ENCODE measurements at regions of chr2 and their contacts with region 1.

Region 1: GRCh38 chr2:219229305-219230058 is at the starts of genes ANKZF1 and ATG9A:
- DNase-seq: peak; percentile 97 to 98
- H3K4me3 ChIP-seq: peak within 1 kb of the TSS; percentile 67
- H3K27ac ChIP-seq: peak within 1 kb of the TSS; percentile 77
- H3K4me1 ChIP-seq: peaks cover 16% of the 10 kb centered on the region
- H3K27me3 ChIP-seq: no peaks in the 10 kb centered on the region
- CTCF ChIP-seq: no peak
- total RNA-seq, gene ANKZF1: 62.2 and 65.1 TPM in 2 replicates
- total RNA-seq, gene ATG9A: 56.0 and 64.5 TPM in 2 replicates

Region 2: GRCh38 chr2:218944759-218945404 is 284.6 kb before region 1 on chr2:
- CTCF ChIA-PET with region 1: no interaction called
- POLR2A ChIA-PET with region 1: no interaction called
- intact Hi-C with region 1: no loop called
- DNase-seq: no peak
- H3K4me3 ChIP-seq: no peak overlapping the region
- H3K27ac ChIP-seq: no peak overlapping the region
- H3K4me1 ChIP-seq: no peaks in the 10 kb centered on the region
- H3K27me3 ChIP-seq: no peaks in the 10 kb centered on the region
- CTCF ChIP-seq: no peak

Region 3: DNA sequence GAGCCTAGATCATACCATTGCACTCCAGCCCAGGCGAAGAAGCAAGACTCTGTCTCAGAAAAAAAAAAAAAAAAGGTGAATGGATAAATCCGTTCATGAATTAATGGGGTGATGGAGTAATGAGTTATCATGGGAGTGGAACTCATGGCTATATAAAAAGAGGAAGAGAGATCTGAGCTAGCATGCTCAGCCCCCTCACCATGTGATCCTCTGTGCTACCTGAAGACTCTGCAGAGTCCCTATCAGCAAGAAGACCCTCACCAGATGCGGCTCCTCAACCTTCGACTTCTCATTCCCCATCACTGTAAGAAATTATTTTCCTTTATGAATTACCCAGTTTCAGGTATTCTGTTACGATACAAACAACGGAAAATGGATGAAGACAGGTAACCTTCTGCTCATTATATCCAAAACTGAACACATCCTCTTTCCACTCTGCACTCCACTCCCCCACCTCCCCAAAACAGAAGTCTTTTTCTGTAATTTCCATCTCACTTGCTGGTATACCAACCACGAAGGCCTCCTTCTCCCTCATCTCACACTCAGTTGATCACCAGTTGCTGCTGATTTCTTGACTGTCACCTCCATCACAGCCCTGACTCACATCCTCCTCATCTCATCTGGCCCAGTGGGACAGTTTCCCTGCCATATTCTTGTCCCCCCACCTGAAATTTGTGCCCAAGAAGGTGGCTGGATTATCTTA is 42.6 kb before region 1 on chr2:
- CTCF ChIA-PET with region 1: no interaction called
- POLR2A ChIA-PET with region 1: no interaction called
- intact Hi-C with region 1: no loop called
- DNase-seq: no peak
- H3K4me3 ChIP-seq: no peak overlapping the region
- H3K27ac ChIP-seq: no peak overlapping the region
- H3K4me1 ChIP-seq: no peaks in the 10 kb centered on the region
- H3K27me3 ChIP-seq: no peaks in the 10 kb centered on the region
- CTCF ChIP-seq: no peak

Region 4: GRCh38 chr2:219253753-219254590 is 24.5 kb after region 1 on chr2 and contains the start of gene TUBA4A:
- CTCF ChIA-PET with region 1: no interaction called
- POLR2A ChIA-PET with region 1: interaction called, 6 read pairs
- intact Hi-C with region 1: loop called (anchors 1 kb)
- DNase-seq: peak; percentile 65 to 87
- H3K4me3 ChIP-seq: peak within 1 kb of the TSS; percentile 87
- H3K27ac ChIP-seq: peak within 1 kb of the TSS; percentile 43
- H3K4me1 ChIP-seq: peaks cover 46% of the 10 kb centered on the region
- H3K27me3 ChIP-seq: no peaks in the 10 kb centered on the region
- CTCF ChIP-seq: no peak
- total RNA-seq, gene TUBA4A: 118 and 157 TPM in 2 replicates

Region 5: DNA sequence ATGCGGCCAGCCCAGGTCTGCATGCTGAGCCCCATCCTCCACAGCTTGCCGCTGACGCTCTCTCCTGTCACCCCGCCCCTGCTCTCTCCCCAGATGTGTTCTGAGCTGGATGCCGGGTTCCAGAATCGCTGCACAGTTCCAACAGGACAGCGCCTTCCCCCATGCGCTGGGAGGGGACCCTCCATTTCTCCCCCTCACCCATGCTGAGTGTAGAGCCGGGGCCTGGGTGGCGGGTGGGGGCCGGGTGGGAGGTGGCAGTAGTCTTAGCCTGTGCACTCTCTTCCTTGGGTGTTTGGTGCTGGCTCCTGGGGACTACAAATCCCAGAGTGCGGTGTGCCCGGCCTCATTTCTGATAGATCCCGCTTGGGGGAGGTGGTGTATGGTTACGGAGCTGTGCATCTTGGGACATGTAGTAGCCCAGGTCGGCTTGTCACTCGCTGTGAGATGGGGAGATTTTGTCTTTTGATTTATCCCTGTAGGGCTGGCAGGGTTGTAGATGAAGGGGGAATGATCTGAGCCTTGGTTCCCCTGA is 56.5 kb after region 1 on chr2:
- CTCF ChIA-PET with region 1: no interaction called
- POLR2A ChIA-PET with region 1: no interaction called
- intact Hi-C with region 1: loop called (anchors 2 kb)
- DNase-seq: no peak
- H3K4me3 ChIP-seq: no peak overlapping the region
- H3K27ac ChIP-seq: no peak overlapping the region
- H3K4me1 ChIP-seq: peaks cover 12% of the 10 kb centered on the region
- H3K27me3 ChIP-seq: no peaks in the 10 kb centered on the region
- CTCF ChIP-seq: no peak